Activated CD8-positive, alpha-beta T cell treated with anti-CD3 and anti-CD28 coated beads, Interleukin-2, amount 10 ng/mL, durations not matched to agents 7 days and 5 days (primary cell): ENCODE measurements at regions of chr13 and their contacts with region 1.

Region 1: GRCh38 chr13:50911937-50912795 is 2.6 kb downstream of the RNASEH2B start:
- DNase-seq: peak; percentile 98
- ATAC-seq: peak; percentile 73
- H3K4me3 Mint-ChIP-seq: peak overlapping the region; percentile 91
- H3K27ac Mint-ChIP-seq: peak overlapping the region; percentile 96
- H3K4me1 Mint-ChIP-seq: peaks cover 68% of the 10 kb centered on the region
- H3K27me3 Mint-ChIP-seq: no peaks in the 10 kb centered on the region

Region 2: DNA sequence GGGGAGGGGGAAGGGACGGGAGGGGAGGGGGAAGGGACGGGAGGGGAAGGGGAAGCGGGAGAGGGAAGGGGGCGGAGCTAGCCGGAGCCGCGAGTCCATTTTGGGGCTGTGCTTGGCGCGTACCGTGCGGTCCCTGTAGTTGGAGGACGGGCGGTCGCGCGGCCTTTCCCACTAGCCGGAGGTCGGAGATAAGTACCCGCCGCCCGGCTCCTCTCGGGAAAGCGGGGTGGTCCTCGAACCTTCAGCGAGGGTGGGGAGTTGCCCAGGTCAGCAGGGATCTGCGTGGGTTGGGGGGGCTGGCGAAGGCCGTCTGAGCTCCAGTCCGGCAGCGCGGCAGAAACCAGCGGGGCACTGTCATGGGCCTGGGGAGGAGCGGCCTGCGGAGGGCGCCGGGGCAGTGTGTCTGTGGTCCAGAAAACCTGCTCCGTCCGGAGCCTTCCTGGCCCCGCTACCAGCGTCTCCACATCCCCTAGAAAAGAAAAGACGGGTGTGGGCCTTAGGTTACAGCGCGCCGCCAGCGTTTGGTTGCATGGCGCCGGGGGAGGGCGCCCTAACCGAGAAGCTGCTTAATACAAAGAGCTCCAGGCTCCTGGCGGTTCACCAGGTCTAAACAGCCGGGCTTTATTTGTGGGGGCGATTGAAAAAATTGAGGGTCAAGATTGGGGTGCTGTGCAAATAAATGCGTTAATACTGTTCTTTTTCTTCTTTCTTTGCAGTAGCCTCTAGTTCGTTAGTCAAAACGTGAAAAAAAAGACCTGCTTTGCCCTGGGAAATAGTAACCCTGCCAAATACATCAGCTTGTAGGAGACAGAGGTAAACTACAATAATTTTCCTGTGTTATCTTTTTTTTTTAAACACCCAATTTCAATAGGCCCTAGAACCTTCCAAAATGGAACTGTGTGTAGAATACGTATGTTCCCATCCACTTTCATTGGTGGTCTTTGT is 914.9 kb before region 1 on chr13 and contains the start of gene TRIM13:
- CTCF ChIA-PET with region 1: interaction called, 21 read pairs
- POLR2A ChIA-PET with region 1: interaction called, 23 read pairs
- DNase-seq: peak; percentile 89
- ATAC-seq: peak; percentile 87
- H3K4me3 Mint-ChIP-seq: peak within 1 kb of the TSS; percentile 84
- H3K27ac Mint-ChIP-seq: peak within 1 kb of the TSS; percentile 91
- H3K4me1 Mint-ChIP-seq: peaks cover 32% of the 10 kb centered on the region
- H3K27me3 Mint-ChIP-seq: no peaks in the 10 kb centered on the region
- total RNA-seq, gene TRIM13: 11.8 to 12.0 TPM

Region 3: DNA sequence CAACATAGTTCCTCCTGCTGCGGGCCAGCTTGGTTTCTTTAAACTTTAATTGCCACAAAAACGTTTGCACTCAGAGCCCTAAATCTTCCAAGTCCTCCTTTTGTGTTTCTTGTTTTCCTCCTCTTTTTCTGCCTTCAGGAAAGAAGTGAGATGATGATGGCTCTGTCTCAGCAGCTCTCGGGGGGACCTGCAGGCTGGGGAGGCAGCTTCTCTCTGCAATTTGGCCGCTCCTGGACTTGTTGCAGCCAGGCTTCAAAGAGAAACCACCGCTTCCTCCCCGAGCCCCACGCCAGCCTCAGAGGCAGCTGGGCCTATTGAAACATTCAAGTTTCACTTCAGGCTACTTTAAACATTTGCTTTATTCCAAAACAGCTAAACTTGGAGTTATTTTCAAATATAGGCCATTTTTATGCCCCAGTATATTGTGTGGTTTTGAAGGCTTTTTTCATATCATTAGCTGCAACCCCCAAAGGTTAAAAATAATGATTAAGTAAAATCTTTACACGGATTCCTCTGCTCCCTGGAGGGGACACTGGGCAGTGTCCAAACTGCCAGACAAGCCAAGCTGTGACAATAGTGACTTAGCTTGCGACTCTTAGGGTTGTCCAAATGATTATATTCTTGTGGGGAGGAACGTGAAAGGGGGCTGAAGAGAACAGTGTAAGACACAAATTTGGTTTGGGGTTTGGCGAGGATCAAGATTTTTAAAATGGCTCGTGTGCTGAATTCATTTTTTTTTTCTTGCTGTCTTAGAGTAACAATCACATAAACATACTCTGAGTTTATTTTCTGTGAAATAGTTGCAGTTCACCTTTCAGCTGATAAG is 399.5 kb before region 1 on chr13:
- CTCF ChIA-PET with region 1: interaction called, 16 read pairs
- POLR2A ChIA-PET with region 1: interaction called, 3 read pairs
- DNase-seq: peak; percentile 78
- ATAC-seq: peak; percentile 93
- H3K4me3 Mint-ChIP-seq: no peak overlapping the region
- H3K27ac Mint-ChIP-seq: no peak overlapping the region
- H3K4me1 Mint-ChIP-seq: peaks cover 6% of the 10 kb centered on the region
- H3K27me3 Mint-ChIP-seq: no peaks in the 10 kb centered on the region

Region 4: DNA sequence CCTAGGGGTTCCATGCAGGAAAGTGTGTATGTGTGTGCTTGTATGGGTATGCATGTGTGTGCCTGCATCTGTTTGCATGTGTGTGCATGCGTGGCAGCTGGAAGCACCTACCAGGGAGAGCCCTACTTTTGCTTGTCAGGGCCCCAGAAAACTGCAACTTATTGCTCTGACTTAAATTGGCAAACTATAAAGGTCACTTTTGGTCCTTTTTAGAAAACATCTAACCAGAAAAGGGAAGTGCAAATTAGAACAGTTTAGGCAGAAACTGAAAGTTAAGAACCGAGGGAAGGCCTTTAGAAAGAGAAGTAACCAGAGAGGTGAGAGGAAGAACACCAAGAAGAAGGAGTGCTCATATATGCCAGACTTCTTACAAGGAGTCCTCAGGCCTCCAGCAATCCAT is 101.2 kb before region 1 on chr13:
- CTCF ChIA-PET with region 1: interaction called, 99 read pairs
- POLR2A ChIA-PET with region 1: interaction called, 18 read pairs
- DNase-seq: no peak
- ATAC-seq: no peak
- H3K4me3 Mint-ChIP-seq: peak overlapping the region; percentile 26
- H3K27ac Mint-ChIP-seq: peak overlapping the region; percentile 60
- H3K4me1 Mint-ChIP-seq: peaks cover 18% of the 10 kb centered on the region
- H3K27me3 Mint-ChIP-seq: no peaks in the 10 kb centered on the region

Region 5: DNA sequence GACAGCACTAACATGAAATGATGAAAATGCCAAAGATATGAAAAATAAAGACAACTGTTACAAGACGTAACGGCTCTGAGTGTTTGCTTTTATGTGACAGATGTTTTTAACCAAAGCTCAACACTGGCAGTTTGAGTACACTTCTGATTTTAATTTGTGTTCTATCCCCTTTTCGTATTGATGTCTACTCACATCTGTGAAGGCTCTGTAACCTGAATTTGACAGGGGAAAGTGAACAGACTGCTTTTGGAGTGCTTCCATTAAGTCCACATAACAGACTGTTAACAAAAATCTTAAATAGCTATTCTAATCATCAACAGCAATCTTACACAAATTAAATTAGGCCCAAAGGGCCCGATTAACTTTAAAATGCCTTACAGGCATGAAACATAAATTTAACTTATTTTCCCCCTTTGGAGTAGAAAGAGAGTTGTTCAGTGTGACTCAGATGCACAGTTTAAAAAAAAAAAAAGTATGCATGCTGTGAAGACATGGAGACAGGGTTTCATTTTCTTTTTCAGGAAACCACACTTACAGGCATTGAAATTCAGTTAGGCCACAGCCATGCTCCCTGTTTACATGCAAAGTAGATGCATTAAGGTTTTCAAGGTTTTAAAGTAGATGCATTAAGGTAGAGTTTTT is 18.8 kb before region 1 on chr13:
- CTCF ChIA-PET with region 1: interaction called, 91 read pairs
- POLR2A ChIA-PET with region 1: interaction called, 100 read pairs
- DNase-seq: peak; percentile 61
- ATAC-seq: peak; percentile 94
- H3K4me3 Mint-ChIP-seq: peak overlapping the region; percentile 62
- H3K27ac Mint-ChIP-seq: peak overlapping the region; percentile 94
- H3K4me1 Mint-ChIP-seq: peaks cover 52% of the 10 kb centered on the region
- H3K27me3 Mint-ChIP-seq: no peaks in the 10 kb centered on the region

Region 6: GRCh38 chr13:50942630-50943311 is 30.6 kb after region 1 on chr13:
- CTCF ChIA-PET with region 1: no interaction called
- POLR2A ChIA-PET with region 1: no interaction called
- DNase-seq: no peak
- ATAC-seq: no peak
- H3K4me3 Mint-ChIP-seq: no peak overlapping the region
- H3K27ac Mint-ChIP-seq: no peak overlapping the region
- H3K4me1 Mint-ChIP-seq: no peaks in the 10 kb centered on the region
- H3K27me3 Mint-ChIP-seq: no peaks in the 10 kb centered on the region

Region 7: DNA sequence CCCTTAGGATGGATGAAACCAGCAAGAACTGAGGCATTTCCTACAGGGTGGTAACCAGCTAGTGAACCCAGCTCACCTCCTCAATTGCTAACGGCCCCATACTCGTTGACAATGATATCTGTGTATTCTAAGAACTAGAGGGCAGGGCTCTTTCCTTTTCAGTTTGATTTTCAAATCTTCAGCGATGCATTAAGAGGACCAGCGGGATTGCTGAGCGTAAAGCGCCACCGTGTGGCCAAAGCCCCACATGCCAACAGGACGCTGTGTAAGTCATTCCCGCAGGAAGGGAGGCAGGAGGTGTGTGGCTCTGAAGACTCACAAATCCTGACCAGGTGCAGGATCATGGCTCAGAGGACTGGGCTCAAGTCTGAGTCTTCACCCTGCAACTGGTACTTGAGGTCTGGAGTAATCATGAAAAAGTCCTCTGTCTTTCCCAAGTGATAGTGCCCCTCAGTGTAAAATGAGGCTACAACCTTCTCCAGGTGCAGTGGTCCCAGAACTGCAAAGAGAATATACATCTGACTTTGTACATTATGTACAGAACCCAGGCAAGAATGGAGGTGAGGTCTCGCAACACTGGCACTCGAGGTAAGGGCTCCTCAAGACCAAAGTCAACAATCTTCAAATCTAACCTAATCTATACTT is 158.0 kb after region 1 on chr13:
- CTCF ChIA-PET with region 1: interaction called, 37 read pairs
- POLR2A ChIA-PET with region 1: interaction called, 7 read pairs
- DNase-seq: peak; percentile 86
- ATAC-seq: peak; percentile 93
- H3K4me3 Mint-ChIP-seq: no peak overlapping the region
- H3K27ac Mint-ChIP-seq: peak overlapping the region; percentile 53
- H3K4me1 Mint-ChIP-seq: peaks cover 45% of the 10 kb centered on the region
- H3K27me3 Mint-ChIP-seq: peaks cover 16% of the 10 kb centered on the region